WTC11 (cell line): ENCODE measurements at regions of chr2 and their contacts with region 1.

Region 1: GRCh38 chr2:102020596-102021181 is 28.9 kb downstream of the IL1R2 start:
- DNase-seq: peak; percentile 93
- ATAC-seq: peak; percentile 98
- H3K4me3 Mint-ChIP-seq: no peak overlapping the region
- H3K27ac Mint-ChIP-seq: no peak overlapping the region
- H3K4me1 Mint-ChIP-seq: 0 out of 2 replicates have a peak, but pooled peaks cover 7% of the 10 kb centered on the region
- H3K27me3 Mint-ChIP-seq: no peaks in the 10 kb centered on the region
- CTCF ChIP-seq: peak; percentile 98

Region 2: DNA sequence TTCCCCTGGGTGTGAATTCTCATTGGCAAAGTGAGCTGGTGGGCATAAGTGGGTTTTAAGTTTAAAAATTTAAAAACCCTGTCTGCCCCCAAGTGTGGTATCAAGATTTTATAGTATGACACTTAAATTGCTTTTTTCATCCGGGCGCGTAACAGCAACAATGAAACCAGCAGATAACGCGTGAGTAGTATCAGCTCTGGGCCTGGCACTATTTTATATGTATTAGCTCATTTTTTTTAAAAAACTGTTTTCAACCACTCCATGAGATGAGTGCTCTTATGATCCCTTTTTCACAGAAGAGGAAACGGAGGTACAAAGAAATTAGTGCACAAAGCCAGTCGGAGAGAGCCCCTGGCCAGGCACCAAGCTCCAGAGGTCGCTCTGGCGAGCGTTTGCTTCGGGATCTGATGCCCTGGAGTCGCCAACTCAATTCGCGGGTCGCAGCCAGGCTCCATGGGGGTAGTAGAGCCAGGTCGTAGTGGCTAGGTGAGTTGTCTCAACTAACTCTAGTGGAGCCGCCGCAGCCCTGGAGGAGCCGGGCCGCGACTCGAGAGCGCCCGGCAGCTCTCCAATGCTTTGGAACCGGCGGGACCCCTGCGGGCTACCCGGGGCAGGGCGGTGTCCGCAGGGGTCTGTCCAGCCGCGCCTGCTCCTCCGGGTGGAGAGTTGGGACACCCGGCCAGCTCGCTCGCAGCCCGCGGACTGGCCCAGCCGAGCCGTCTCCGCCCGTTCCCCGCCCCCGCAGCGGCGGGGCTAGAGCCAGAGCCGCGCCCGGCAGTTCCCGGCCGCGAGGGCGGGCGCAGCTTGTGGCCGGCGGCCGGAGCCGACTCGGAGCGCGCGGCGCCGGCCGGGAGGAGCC is 121.5 kb after region 1 on chr2 and contains the start of gene IL1R1:
- CTCF ChIA-PET with region 1: interaction called, 10 read pairs
- POLR2A ChIA-PET with region 1: no interaction called
- DNase-seq: peak; percentile 62
- ATAC-seq: peak; percentile 86
- H3K4me3 Mint-ChIP-seq: peak within 1 kb of the TSS; percentile 74
- H3K27ac Mint-ChIP-seq: no peak within 1 kb of the TSS
- H3K4me1 Mint-ChIP-seq: peaks cover 17% of the 10 kb centered on the region
- H3K27me3 Mint-ChIP-seq: peaks cover 41% of the 10 kb centered on the region
- CTCF ChIP-seq: no peak
- total RNA-seq, gene IL1R1: 0.37 to 0.78 TPM (median 0.55 TPM) in 3 replicates

Region 3: DNA sequence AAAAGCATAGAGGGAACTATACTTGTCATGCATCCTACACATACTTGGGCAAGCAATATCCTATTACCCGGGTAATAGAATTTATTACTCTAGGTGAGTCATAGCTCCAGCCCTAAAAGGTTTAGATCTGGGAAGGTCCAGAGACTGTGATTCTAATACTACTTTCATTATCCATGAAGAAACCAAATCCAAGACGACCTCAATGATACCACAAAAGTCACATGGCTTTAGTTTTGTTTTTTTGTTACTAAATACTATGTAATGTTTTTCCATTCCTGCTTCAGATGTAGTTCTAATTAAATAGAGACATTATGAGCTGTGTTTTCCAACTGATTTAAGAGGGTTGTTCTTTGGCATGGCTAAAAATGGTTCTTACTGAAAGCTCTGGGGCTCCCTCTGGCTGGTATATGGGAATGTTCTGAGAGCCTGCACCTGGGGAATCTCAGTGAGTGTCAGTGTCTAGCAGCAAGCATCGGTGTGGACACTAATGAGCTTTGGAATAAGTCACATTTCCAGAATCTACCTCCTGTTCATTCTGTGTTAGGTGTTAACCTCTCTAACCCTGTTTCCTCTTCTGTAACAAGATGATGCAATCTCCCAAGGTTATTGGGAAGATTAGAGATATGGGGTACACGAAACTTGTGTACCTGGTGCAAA is 145.6 kb after region 1 on chr2:
- CTCF ChIA-PET with region 1: interaction called, 36 read pairs
- POLR2A ChIA-PET with region 1: no interaction called
- DNase-seq: no peak
- ATAC-seq: peak; percentile 85
- H3K4me3 Mint-ChIP-seq: no peak overlapping the region
- H3K27ac Mint-ChIP-seq: no peak overlapping the region
- H3K4me1 Mint-ChIP-seq: peaks cover 1% of the 10 kb centered on the region
- H3K27me3 Mint-ChIP-seq: no peaks in the 10 kb centered on the region
- CTCF ChIP-seq: no peak

Region 4: GRCh38 chr2:102235491-102235890 is 214.8 kb after region 1 on chr2:
- CTCF ChIA-PET with region 1: interaction called, 55 read pairs
- POLR2A ChIA-PET with region 1: no interaction called
- DNase-seq: peak; percentile 51
- ATAC-seq: peak; percentile 73
- H3K4me3 Mint-ChIP-seq: no peak overlapping the region
- H3K27ac Mint-ChIP-seq: no peak overlapping the region
- H3K4me1 Mint-ChIP-seq: peaks cover 7% of the 10 kb centered on the region
- H3K27me3 Mint-ChIP-seq: no peaks in the 10 kb centered on the region
- CTCF ChIP-seq: no peak